PC-3 (cell line): ENCODE measurements at regions of chr14 and their contacts with region 1.

Region 1: DNA sequence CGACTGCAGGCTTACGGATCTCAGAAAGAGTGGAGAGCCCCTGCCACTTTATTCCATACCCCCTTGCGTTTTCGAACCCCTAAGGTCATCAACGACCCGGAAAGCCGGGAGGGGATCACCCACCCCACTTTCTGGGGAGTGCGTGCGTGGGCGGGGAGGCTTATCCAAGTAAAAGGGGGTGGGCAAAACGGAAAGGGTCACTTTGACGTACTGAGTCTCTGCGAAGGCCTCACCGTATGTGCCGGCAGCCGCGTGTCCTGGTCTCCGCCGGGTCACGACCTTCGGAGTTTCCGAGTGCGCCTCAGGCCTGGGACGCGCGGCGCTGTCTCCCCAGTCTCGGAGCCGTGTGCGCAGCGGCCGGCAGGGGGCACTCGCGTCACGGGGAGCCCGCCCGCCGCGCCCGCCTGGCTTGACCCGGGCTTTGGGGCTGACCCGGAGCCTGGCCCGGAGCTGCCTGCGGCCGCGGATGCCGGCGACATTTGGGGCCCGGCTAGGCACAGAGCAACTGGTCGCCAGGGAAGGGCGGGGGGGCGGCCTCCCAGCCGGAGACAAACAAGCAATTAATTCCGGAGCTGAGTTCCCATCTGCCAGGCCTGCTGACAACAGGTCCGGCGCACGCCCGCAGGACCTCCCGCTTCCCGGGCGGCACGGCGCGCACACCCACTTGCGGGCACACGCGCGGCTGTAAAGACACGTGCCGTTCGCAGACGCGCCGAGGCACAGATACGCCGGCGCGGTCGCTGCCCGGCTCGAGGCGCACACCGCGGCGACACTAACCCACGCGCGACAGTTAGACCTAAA is 890 bp upstream of the KIF26A start:
- DNase-seq: peak; percentile 56
- ATAC-seq: peak; percentile 72
- H3K4me3 ChIP-seq: peak overlapping the region; percentile 63
- H3K27ac ChIP-seq: no peak overlapping the region
- H3K4me1 ChIP-seq: peaks cover 5% of the 10 kb centered on the region; the same call in 1 of the 2 replicates
- H3K27me3 ChIP-seq: peaks cover 50% of the 10 kb centered on the region
- CTCF ChIP-seq: peak; percentile 79

Region 2: GRCh38 chr14:104341532-104342434 is 204.3 kb after region 1 on chr14:
- CTCF ChIA-PET with region 1: no interaction called
- POLR2A ChIA-PET with region 1: no interaction called
- intact Hi-C with region 1: no loop called
- DNase-seq: peak; percentile 79
- ATAC-seq: peak; percentile 83
- H3K4me3 ChIP-seq: no peak overlapping the region
- H3K27ac ChIP-seq: no peak overlapping the region
- H3K4me1 ChIP-seq: peaks cover 16% of the 10 kb centered on the region
- H3K27me3 ChIP-seq: peaks cover 44% of the 10 kb centered on the region
- CTCF ChIP-seq: peak; percentile 71

Region 3: GRCh38 chr14:104370256-104370870 is 232.9 kb after region 1 on chr14:
- CTCF ChIA-PET with region 1: no interaction called
- POLR2A ChIA-PET with region 1: no interaction called
- intact Hi-C with region 1: loop called (anchors 2 kb)
- DNase-seq: peak; percentile 53
- ATAC-seq: peak; percentile 96
- H3K4me3 ChIP-seq: no peak overlapping the region
- H3K27ac ChIP-seq: no peak overlapping the region
- H3K4me1 ChIP-seq: no peaks in the 10 kb centered on the region
- H3K27me3 ChIP-seq: peaks cover 76% of the 10 kb centered on the region
- CTCF ChIP-seq: peak; percentile 67

Region 4: GRCh38 chr14:104563742-104564615 is 426.5 kb after region 1 on chr14:
- CTCF ChIA-PET with region 1: no interaction called
- POLR2A ChIA-PET with region 1: no interaction called
- intact Hi-C with region 1: loop called (anchors 1 kb)
- DNase-seq: peak; percentile 73
- ATAC-seq: peak; percentile 92
- H3K4me3 ChIP-seq: no peak overlapping the region
- H3K27ac ChIP-seq: no peak overlapping the region
- H3K4me1 ChIP-seq: no peaks in the 10 kb centered on the region
- H3K27me3 ChIP-seq: peaks cover 83% of the 10 kb centered on the region
- CTCF ChIP-seq: peak; percentile 87

Region 5: GRCh38 chr14:104639889-104640548 is 502.5 kb after region 1 on chr14:
- CTCF ChIA-PET with region 1: no interaction called
- POLR2A ChIA-PET with region 1: no interaction called
- intact Hi-C with region 1: loop called (anchors 10 kb)
- DNase-seq: peak; percentile 73
- ATAC-seq: peak; percentile 96
- H3K4me3 ChIP-seq: no peak overlapping the region
- H3K27ac ChIP-seq: no peak overlapping the region
- H3K4me1 ChIP-seq: 0 out of 2 replicates have a peak, but pooled peaks cover 10% of the 10 kb centered on the region
- H3K27me3 ChIP-seq: peaks cover 40% of the 10 kb centered on the region
- CTCF ChIP-seq: peak; percentile 95